WTC11 (cell line): ENCODE measurements at regions of chr10 and their contacts with region 1.

Region 1: DNA sequence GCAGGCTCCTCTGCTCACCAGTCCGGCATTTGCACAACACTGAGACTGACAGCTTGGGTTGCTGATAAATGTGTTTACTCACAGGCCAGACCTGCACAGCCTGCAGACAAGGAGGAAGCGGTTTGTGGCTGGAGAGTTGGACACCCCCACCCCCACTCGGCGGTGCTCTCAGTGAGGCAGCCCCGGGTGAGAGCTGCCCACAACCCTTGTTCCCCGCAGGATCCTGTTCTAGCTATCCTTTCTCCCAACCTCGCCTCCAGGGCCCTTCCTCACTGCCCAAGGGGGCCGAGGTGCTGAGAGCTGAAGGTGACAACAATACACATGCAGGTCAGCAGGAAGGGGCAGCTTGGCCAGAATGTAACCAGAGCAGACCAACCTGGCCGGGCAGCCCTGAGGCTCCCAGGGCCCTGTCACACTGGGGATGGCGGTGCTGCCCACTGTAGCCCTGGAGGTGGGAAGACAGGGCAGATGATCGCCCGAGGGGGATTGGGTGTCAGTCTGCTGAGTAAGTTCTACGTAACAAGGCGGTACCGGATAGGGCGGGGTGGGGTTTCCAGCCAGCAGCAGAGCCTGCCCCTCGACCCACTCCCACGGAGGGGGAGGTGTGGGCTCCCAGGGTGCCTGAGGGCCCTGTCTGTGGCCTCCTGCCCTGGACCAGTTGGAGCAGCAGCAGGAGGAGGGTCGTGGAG is 2.1 kb upstream of the ADAM8 start:
- DNase-seq: no peak
- ATAC-seq: no peak
- H3K4me3 Mint-ChIP-seq: no peak overlapping the region
- H3K27ac Mint-ChIP-seq: peak overlapping the region; percentile 57
- H3K4me1 Mint-ChIP-seq: peaks cover 6% of the 10 kb centered on the region; the same call in 1 of the 2 replicates
- H3K27me3 Mint-ChIP-seq: no peaks in the 10 kb centered on the region
- CTCF ChIP-seq: no peak

Region 2: GRCh38 chr10:133058331-133059094 is 220.2 kb before region 1 on chr10:
- CTCF ChIA-PET with region 1: no interaction called
- POLR2A ChIA-PET with region 1: no interaction called
- DNase-seq: no peak
- ATAC-seq: no peak
- H3K4me3 Mint-ChIP-seq: no peak overlapping the region
- H3K27ac Mint-ChIP-seq: no peak overlapping the region
- H3K4me1 Mint-ChIP-seq: no peaks in the 10 kb centered on the region
- H3K27me3 Mint-ChIP-seq: no peaks in the 10 kb centered on the region
- CTCF ChIP-seq: no peak

Region 3: GRCh38 chr10:133308421-133309110 is 29.8 kb after region 1 on chr10 and contains the starts of genes TUBGCP2 and ZNF511:
- CTCF ChIA-PET with region 1: interaction called, 11 read pairs
- POLR2A ChIA-PET with region 1: no interaction called
- DNase-seq: peak; percentile 78
- ATAC-seq: peak; percentile 58
- H3K4me3 Mint-ChIP-seq: peak within 1 kb of the TSS; percentile 97
- H3K27ac Mint-ChIP-seq: peak within 1 kb of the TSS; percentile 93
- H3K4me1 Mint-ChIP-seq: peaks cover 15% of the 10 kb centered on the region
- H3K27me3 Mint-ChIP-seq: no peaks in the 10 kb centered on the region
- CTCF ChIP-seq: no peak
- total RNA-seq, gene TUBGCP2: 53.2 to 62.5 TPM (median 53.8 TPM) in 3 replicates
- total RNA-seq, gene ZNF511: 69.6 to 86.4 TPM (median 73.2 TPM) in 3 replicates